HCT116 (cell line): ENCODE measurements at regions of chr12 and their contacts with region 1.

Region 1: GRCh38 chr12:16359512-16360491 is 12.4 kb downstream of the MGST1 start:
- DNase-seq: peak; percentile 47
- ATAC-seq: peak; percentile 91
- H3K4me3 ChIP-seq: no peak overlapping the region
- H3K27ac ChIP-seq: no peak overlapping the region
- H3K4me1 ChIP-seq: no peaks in the 10 kb centered on the region
- H3K27me3 ChIP-seq: no peaks in the 10 kb centered on the region
- CTCF ChIP-seq: peak; percentile 52 to 95 (median 93); a peak in 5 of 6 replicates
- POLR2A ChIP-seq: no peak
- RAD21 ChIP-seq: peak; percentile 76

Region 2: GRCh38 chr12:15982471-15982870 is 377.3 kb before region 1 on chr12:
- CTCF ChIA-PET with region 1: no interaction called
- POLR2A ChIA-PET with region 1: no interaction called
- RAD21 ChIA-PET with region 1: no interaction called
- intact Hi-C with region 1: loop called (anchors 1 kb)
- DNase-seq: no peak
- ATAC-seq: no peak
- H3K4me3 ChIP-seq: no peak overlapping the region
- H3K27ac ChIP-seq: no peak overlapping the region
- H3K4me1 ChIP-seq: peaks cover 0 to 7% of the 10 kb centered on the region in 2 experiments; a peak in 1 of 4 replicates
- H3K27me3 ChIP-seq: no peaks in the 10 kb centered on the region
- CTCF ChIP-seq: peak in 2 of 3 experiments; percentile 29 to 53; a peak in 3 of 6 replicates
- POLR2A ChIP-seq: no peak
- RAD21 ChIP-seq: peak; percentile 43

Region 3: DNA sequence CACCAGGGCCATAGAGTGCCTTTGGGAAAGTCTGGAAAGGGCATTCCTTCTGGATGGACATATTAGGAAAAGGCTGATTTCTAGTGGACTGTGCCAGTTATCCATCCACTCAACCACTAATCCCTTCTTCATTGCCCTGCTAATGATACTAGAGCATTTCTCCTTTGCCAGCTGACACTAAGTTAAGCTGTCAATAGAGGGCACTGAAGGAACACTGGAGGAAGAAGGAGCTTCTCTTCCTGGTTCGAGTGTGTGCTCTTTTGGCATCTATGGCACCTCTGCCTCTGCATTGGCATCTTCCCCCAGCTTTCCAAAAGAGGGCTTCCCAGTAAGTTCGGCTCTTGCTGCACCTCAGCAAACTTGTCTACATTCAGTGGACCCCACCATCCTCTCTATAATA is 283.2 kb before region 1 on chr12:
- CTCF ChIA-PET with region 1: no interaction called
- POLR2A ChIA-PET with region 1: no interaction called
- RAD21 ChIA-PET with region 1: no interaction called
- intact Hi-C with region 1: loop called (anchors 1 kb)
- DNase-seq: peak; percentile 29
- ATAC-seq: peak; percentile 89
- H3K4me3 ChIP-seq: no peak overlapping the region
- H3K27ac ChIP-seq: no peak overlapping the region
- H3K4me1 ChIP-seq: no peaks in the 10 kb centered on the region
- H3K27me3 ChIP-seq: no peaks in the 10 kb centered on the region
- CTCF ChIP-seq: peak; percentile 35 to 58 (median 56); a peak in 4 of 6 replicates
- POLR2A ChIP-seq: no peak
- RAD21 ChIP-seq: peak; percentile 73

Region 4: DNA sequence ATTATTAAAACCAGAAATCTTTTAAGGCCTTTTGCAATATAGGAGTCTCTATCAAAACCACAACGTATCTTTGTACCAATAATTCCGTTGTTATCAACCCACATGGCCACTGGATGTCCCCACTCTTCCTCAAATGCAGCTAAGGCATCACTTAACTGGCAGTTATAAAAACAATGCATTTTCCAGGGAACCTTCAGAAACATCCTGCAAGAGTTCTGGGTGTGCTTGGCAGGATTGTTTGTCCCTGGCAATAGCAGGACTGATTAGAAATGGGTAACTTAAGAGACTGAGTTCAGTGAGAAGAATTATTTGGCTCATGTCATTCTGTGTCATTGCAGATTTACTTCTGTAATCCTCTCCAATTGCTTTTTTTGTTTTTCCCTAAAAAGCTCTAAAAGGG is 194.3 kb before region 1 on chr12:
- CTCF ChIA-PET with region 1: interaction called, 14 read pairs
- POLR2A ChIA-PET with region 1: no interaction called
- RAD21 ChIA-PET with region 1: no interaction called
- intact Hi-C with region 1: loop called (anchors 1 kb)
- DNase-seq: peak; percentile 27
- ATAC-seq: peak; percentile 82
- H3K4me3 ChIP-seq: no peak overlapping the region
- H3K27ac ChIP-seq: no peak overlapping the region
- H3K4me1 ChIP-seq: no peaks in the 10 kb centered on the region
- H3K27me3 ChIP-seq: no peaks in the 10 kb centered on the region
- CTCF ChIP-seq: peak; percentile 55 to 68 (median 59); a peak in 5 of 6 replicates
- POLR2A ChIP-seq: no peak
- RAD21 ChIP-seq: peak; percentile 85